Breast epithelium (tissue), 4 donors: ENCODE measurements at regions of chr7 and their contacts with region 1.

Region 1: GRCh38 chr7:106068994-106069393 is 43.1 kb downstream of the SYPL1 start:
- DNase-seq: no peak
- H3K4me3 ChIP-seq: no peak overlapping the region
- H3K27ac ChIP-seq: peak overlapping the region; percentile 71 to 89
- H3K4me1 ChIP-seq: peaks cover 2 to 6% of the 10 kb centered on the region in 2 donors
- H3K27me3 ChIP-seq: no peaks in the 10 kb centered on the region
- CTCF ChIP-seq: no peak
- POLR2A ChIP-seq: no peak

Region 2: GRCh38 chr7:105408791-105409410 is 660.1 kb before region 1 on chr7:
- intact Hi-C with region 1: no loop called
- DNase-seq: no peak
- H3K4me3 ChIP-seq: no peak overlapping the region
- H3K27ac ChIP-seq: no peak overlapping the region
- H3K4me1 ChIP-seq: no peaks in the 10 kb centered on the region
- H3K27me3 ChIP-seq: no peaks in the 10 kb centered on the region
- CTCF ChIP-seq: no peak
- POLR2A ChIP-seq: no peak

Region 3: GRCh38 chr7:106112117-106112971 is 43.4 kb after region 1 on chr7 and contains the start of gene SYPL1:
- intact Hi-C with region 1: loop called (anchors 2 kb)
- DNase-seq: peak; percentile 90 to 94
- H3K4me3 ChIP-seq: peak within 1 kb of the TSS; percentile 65 to 92 (median 83)
- H3K27ac ChIP-seq: peak within 1 kb of the TSS; percentile 99
- H3K4me1 ChIP-seq: peaks cover 0 to 8% of the 10 kb centered on the region in 2 donors
- H3K27me3 ChIP-seq: no peaks in the 10 kb centered on the region
- CTCF ChIP-seq: peak in 1 of 3 donors; percentile 25
- POLR2A ChIP-seq: peak; percentile 17
- total RNA-seq, gene SYPL1: 96.2 to 116 (median 98.3) TPM

Region 4: GRCh38 chr7:106535234-106536026 is 466.4 kb after region 1 on chr7:
- intact Hi-C with region 1: no loop called
- DNase-seq: no peak
- H3K4me3 ChIP-seq: no peak overlapping the region
- H3K27ac ChIP-seq: peak overlapping the region in 1 of 2 donors; percentile 32
- H3K4me1 ChIP-seq: no peaks in the 10 kb centered on the region
- H3K27me3 ChIP-seq: no peaks in the 10 kb centered on the region
- CTCF ChIP-seq: no peak
- POLR2A ChIP-seq: no peak

Region 5: DNA sequence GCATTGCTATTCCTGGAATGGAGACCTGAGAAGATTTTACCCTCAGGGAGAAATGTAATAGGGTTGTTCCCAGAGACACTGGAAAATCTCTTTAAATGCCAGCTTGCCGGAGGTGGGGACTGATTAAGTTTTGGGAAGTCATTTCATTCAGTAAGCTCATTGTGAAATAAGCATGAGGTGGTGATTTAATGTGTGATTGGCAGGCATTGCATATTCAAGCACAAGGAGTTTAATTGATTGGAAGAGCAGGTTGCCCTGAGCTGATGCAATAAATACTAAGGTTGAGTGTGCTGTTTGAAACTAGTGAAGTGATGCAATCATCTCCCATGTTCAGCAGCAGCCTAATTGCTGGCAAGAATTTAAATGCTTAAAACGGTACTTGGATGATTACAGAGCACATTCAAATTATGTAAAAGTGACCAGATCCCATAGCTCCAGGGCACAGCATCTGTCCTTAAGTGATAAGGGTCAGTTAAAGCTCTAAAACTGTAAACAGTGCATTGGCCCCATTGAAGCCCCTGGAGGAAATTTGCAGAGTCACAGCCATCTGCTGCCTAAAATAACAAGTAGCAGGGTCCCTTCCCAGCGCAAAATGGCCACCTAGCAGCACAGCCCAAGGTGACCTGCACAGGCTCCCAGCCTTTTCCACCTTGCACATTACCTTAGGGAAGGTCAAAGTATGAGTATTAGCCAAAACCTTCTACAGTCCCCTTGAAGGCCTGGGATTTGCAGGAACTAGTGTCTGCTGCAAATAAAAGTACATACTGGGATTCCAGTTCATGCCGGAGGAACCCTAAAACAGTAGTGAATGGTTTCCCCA is 499.9 kb after region 1 on chr7:
- intact Hi-C with region 1: no loop called
- DNase-seq: peak in 1 of 2 donors; percentile 79
- H3K4me3 ChIP-seq: no peak overlapping the region
- H3K27ac ChIP-seq: peak overlapping the region; percentile 54 to 76
- H3K4me1 ChIP-seq: peaks cover 0 to 6% of the 10 kb centered on the region in 2 donors
- H3K27me3 ChIP-seq: no peaks in the 10 kb centered on the region
- CTCF ChIP-seq: no peak
- POLR2A ChIP-seq: no peak